ENCODE measurements at regions of chr14 and their contacts with region 1.

Region 1: DNA sequence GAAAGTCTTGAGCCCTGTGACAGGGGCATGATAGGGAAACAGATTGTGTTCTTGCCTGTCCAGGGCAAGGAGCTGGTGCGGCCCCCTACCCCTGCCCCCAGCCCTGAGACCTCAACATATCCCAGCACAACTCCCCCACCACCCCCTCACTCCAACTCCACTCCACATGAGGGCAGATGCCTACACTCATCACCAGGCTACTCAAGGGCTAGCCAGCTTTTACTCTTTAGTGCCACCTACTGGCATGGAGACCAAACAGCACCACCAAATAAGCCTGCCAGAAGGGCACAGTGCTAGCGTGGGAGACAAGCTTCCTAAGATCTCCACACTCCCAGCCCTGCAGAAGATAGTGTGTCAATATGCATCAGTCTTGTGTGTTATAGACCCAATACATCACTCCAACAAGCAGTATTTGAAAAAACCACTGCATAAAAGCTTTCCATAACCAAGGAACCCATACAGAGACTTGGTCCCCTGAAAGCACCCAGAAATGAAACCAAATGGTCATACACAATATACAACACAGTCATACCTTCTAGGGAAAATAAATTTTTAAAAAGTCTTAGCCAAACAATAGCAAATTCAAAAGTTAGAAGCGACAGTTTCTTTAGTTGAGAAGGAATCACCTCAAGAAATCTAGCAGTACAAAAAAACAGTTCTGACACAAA is 154.4 kb downstream of the KCNK10 start:
- DNase-seq: peak; percentile 67
- H3K4me3 Mint-ChIP-seq: no peak overlapping the region
- H3K27ac Mint-ChIP-seq: no peak overlapping the region
- H3K4me1 Mint-ChIP-seq: peaks cover 18% of the 10 kb centered on the region
- H3K27me3 Mint-ChIP-seq: peaks cover 37% of the 10 kb centered on the region

Region 2: GRCh38 chr14:87908550-87908949 is 260.1 kb before region 1 on chr14:
- CTCF ChIA-PET with region 1: no interaction called
- POLR2A ChIA-PET with region 1: no interaction called
- DNase-seq: no peak
- H3K4me3 Mint-ChIP-seq: no peak overlapping the region
- H3K27ac Mint-ChIP-seq: no peak overlapping the region
- H3K4me1 Mint-ChIP-seq: no peaks in the 10 kb centered on the region
- H3K27me3 Mint-ChIP-seq: peaks cover 22% of the 10 kb centered on the region

Region 3: DNA sequence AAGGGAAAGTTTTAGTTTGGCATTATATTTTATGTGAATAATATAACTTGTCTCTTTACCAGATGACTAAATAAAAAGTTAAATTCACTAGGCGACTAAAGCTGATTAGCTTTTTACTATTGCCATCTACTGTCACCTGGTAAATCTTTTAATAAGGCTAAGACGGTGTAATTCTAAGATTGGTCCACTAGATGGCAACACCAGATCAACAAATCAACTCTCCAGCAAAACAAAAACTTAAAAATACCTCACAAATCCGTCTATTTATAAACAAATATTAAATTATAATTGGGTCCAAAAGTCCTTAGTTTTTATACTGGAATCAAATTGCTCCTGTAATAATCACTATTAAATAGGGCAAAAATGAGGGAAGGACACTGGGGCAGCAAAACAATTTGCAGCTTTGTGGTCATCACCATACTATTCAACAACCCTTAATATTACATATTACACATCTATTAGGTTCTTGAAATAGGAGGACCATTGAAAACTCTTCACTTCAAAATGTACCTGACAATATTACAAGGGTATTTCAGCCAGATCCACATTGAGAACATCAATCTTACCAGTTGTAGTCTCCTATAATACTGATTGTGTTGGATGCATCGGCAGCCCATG is 223.5 kb before region 1 on chr14:
- CTCF ChIA-PET with region 1: interaction called, 19 read pairs
- POLR2A ChIA-PET with region 1: no interaction called
- DNase-seq: peak; percentile 24
- H3K4me3 Mint-ChIP-seq: no peak overlapping the region
- H3K27ac Mint-ChIP-seq: no peak overlapping the region
- H3K4me1 Mint-ChIP-seq: peaks cover 5% of the 10 kb centered on the region
- H3K27me3 Mint-ChIP-seq: no peaks in the 10 kb centered on the region

Measured in activated CD4-positive, alpha-beta T cell treated with anti-CD3 and anti-CD28 coated beads, Interleukin-2, amount 10 ng/mL, durations not matched to agents 7 days and 5 days (primary cell).